Mammary epithelial cell (primary cell): ENCODE measurements at regions of chr11 and their contacts with region 1.

Region 1: DNA sequence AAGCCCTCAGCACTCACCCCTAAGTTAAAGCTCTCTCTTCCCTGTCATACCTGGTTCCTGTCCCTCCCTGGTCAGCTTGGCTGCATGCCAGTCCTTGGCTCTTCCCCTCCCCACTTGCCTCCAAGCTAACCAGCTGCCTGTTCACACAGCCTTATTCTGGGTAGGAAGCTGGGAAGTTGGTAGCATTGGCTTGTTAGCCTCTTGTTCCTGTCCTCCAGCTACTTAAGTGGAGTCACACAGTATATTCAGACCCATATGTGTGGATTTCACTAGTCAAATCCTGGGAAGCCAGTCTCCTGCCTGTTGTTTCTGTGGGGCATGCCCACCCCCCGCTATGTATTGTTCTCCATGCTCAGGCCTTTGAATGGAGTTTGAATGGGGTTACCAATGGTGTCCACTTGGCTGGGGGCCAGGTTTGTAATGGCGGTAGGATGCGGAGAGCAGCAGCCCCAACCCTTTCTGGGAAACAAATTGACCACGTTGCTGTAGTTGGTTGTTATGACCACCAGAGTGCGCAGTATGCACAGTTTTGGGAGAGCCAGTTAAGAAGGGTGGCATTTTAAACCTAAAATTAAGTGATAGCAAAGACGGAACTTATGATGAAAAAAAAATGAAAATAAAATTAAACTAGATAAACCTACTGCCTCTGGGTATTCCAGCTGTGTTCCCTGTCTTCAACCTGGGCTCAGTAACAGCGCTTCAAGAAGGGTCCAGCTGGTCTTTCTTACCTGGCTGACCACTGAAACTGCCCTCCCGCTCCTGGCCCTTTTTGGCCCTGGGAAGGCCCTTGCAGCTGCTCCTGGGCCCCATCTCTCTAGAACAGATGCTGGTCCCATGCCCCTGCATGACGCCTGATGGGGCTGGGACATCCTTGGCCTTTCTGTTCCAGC is 10.7 kb upstream of the RPS3 start:
- DNase-seq: peak; percentile 61
- H3K4me3 ChIP-seq: no peak overlapping the region
- H3K27ac ChIP-seq: no peak overlapping the region
- H3K4me1 ChIP-seq: peaks cover 5% of the 10 kb centered on the region
- H3K27me3 ChIP-seq: no peaks in the 10 kb centered on the region
- CTCF ChIP-seq: peak; percentile 78

Region 2: DNA sequence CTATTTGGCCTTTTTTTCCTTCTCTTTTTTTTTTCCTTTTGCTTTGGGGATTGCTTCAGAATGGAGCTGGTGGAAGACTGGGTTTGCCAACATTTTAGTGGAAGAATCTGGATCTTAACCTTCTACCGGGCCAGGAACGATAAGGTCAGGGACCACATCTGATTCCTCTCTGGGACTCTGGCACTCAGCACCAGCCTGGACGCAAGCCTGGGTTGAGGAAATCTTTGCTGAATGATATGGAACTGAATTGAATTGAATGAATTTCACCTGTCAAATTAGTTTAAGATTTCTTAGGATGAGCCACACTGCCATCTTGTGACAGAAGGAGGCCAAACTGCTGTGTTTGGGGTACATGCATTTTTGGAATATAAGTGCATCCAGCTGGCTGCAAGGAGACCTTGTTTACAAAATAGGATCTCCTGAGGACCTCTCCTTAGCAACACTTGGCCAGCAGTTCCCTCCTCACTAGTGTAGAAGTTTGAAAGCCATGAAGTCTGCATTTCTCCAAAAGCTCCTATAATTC is 117.7 kb before region 1 on chr11:
- CTCF ChIA-PET with region 1: no interaction called
- dilution Hi-C with region 1: no loop called
- in situ Hi-C with region 1: loop called in 1 of 2 experiments (anchors 5 kb)
- intact Hi-C with region 1: no loop called
- DNase-seq: no peak
- H3K4me3 ChIP-seq: no peak overlapping the region
- H3K27ac ChIP-seq: no peak overlapping the region
- H3K4me1 ChIP-seq: no peaks in the 10 kb centered on the region
- H3K27me3 ChIP-seq: no peaks in the 10 kb centered on the region
- CTCF ChIP-seq: peak; percentile 38 to 53

Region 3: GRCh38 chr11:75280227-75280701 is 108.4 kb before region 1 on chr11:
- CTCF ChIA-PET with region 1: no interaction called
- dilution Hi-C with region 1: no loop called
- in situ Hi-C with region 1: loop called (anchors 5 kb)
- intact Hi-C with region 1: loop called (anchors 1 kb)
- DNase-seq: peak; percentile 51
- H3K4me3 ChIP-seq: no peak overlapping the region
- H3K27ac ChIP-seq: no peak overlapping the region
- H3K4me1 ChIP-seq: no peaks in the 10 kb centered on the region
- H3K27me3 ChIP-seq: no peaks in the 10 kb centered on the region
- CTCF ChIP-seq: peak; percentile 95 to 98

Region 4: GRCh38 chr11:75328426-75329277 is 60.0 kb before region 1 on chr11:
- CTCF ChIA-PET with region 1: no interaction called
- dilution Hi-C with region 1: no loop called
- in situ Hi-C with region 1: loop called (anchors 5 kb)
- intact Hi-C with region 1: loop called (anchors 1 kb)
- DNase-seq: peak; percentile 66
- H3K4me3 ChIP-seq: no peak overlapping the region
- H3K27ac ChIP-seq: no peak overlapping the region
- H3K4me1 ChIP-seq: peaks cover 25% of the 10 kb centered on the region
- H3K27me3 ChIP-seq: no peaks in the 10 kb centered on the region
- CTCF ChIP-seq: peak; percentile 51 to 82

Region 5: GRCh38 chr11:75422253-75423231 is 33.9 kb after region 1 on chr11:
- CTCF ChIA-PET with region 1: no interaction called
- dilution Hi-C with region 1: no loop called
- in situ Hi-C with region 1: no loop called
- intact Hi-C with region 1: no loop called
- DNase-seq: no peak
- H3K4me3 ChIP-seq: no peak overlapping the region
- H3K27ac ChIP-seq: no peak overlapping the region
- H3K4me1 ChIP-seq: peaks cover 13% of the 10 kb centered on the region
- H3K27me3 ChIP-seq: no peaks in the 10 kb centered on the region
- CTCF ChIP-seq: no peak

Region 6: GRCh38 chr11:75437966-75438659 is 49.5 kb after region 1 on chr11:
- CTCF ChIA-PET with region 1: no interaction called
- dilution Hi-C with region 1: loop called (anchors 5 kb)
- in situ Hi-C with region 1: no loop called
- intact Hi-C with region 1: no loop called
- DNase-seq: no peak
- H3K4me3 ChIP-seq: no peak overlapping the region
- H3K27ac ChIP-seq: no peak overlapping the region
- H3K4me1 ChIP-seq: peaks cover 8% of the 10 kb centered on the region
- H3K27me3 ChIP-seq: no peaks in the 10 kb centered on the region
- CTCF ChIP-seq: no peak

Region 7: DNA sequence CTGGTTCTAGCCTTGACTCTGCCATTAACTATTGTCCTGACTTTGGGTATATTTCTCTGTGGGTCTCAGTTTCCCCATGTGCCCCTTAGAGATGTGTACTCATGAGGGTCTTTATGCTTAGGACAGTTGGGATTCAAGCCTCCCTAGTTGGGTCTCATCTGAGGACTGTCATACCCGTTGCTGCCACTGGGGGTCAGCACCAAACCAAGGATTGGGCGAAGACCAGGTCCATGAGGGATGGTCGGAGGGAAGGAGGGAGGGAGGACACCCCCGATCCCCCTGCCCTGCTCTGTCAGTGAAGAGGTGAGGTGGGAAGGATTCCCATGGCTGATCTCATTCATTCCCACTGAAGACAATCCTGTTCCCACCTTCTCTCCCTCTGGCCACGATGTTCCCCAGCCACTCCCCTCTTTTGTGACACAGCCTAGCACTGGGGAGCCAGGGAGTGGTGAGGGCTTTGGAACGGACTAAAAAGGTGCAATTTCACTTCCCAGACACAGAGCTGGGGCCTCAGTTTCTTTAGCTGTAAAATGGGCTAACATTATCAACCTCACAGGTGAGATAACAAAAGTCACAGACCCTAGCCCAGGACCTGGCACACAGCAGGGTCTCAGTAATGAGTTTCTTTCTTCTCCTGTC is 56.8 kb after region 1 on chr11:
- CTCF ChIA-PET with region 1: no interaction called
- dilution Hi-C with region 1: no loop called
- in situ Hi-C with region 1: no loop called
- intact Hi-C with region 1: loop called (anchors 1 kb)
- DNase-seq: peak; percentile 27
- H3K4me3 ChIP-seq: no peak overlapping the region
- H3K27ac ChIP-seq: no peak overlapping the region
- H3K4me1 ChIP-seq: peaks cover 8% of the 10 kb centered on the region
- H3K27me3 ChIP-seq: no peaks in the 10 kb centered on the region
- CTCF ChIP-seq: peak; percentile 92 to 98

Region 8: GRCh38 chr11:75603791-75604736 is 215.4 kb after region 1 on chr11:
- CTCF ChIA-PET with region 1: no interaction called
- dilution Hi-C with region 1: no loop called
- in situ Hi-C with region 1: no loop called
- intact Hi-C with region 1: no loop called
- DNase-seq: peak; percentile 67
- H3K4me3 ChIP-seq: no peak overlapping the region
- H3K27ac ChIP-seq: no peak overlapping the region
- H3K4me1 ChIP-seq: peaks cover 18% of the 10 kb centered on the region
- H3K27me3 ChIP-seq: no peaks in the 10 kb centered on the region
- CTCF ChIP-seq: no peak